Calu3 (cell line): ENCODE measurements at regions of chr12 and their contacts with region 1.

Region 1: DNA sequence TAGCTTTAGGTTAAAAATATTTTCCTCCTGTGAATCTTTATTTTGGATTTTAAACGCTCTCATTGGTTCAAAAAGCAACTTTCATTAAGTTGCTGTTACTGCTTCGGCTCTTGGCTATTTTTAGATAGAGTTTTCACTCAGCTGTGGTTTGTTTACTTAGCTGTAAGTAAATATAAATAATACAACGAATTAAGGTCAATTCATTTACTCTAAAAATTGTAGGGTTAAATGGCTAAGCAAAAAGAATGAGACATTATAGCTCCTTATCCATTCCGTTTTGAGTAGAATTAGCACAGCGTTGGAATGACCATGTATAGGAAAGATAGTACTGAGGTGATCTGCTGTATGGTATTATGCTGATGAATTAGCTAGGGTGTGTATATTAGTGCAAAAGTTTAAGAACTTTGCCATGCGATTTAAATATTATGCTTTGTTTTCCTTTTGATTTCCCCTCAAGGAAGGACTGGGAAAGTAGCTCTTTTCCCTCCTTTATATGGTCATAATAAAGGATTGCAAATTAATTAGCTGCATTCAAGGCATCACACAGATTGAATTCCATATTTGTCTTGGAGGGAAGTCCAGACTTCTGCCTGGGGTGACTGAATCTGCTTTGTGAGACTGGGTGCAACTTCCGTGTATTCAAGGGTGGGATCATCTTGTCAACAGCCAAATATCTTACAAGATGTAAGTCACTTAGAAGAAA is 28.1 kb downstream of the STK38L start:
- DNase-seq: no peak
- H3K4me3 Mint-ChIP-seq: no peak overlapping the region
- H3K27ac Mint-ChIP-seq: no peak overlapping the region
- H3K4me1 Mint-ChIP-seq: peaks cover 31% of the 10 kb centered on the region
- H3K27me3 Mint-ChIP-seq: no peaks in the 10 kb centered on the region
- CTCF ChIP-seq: no peak

Region 2: DNA sequence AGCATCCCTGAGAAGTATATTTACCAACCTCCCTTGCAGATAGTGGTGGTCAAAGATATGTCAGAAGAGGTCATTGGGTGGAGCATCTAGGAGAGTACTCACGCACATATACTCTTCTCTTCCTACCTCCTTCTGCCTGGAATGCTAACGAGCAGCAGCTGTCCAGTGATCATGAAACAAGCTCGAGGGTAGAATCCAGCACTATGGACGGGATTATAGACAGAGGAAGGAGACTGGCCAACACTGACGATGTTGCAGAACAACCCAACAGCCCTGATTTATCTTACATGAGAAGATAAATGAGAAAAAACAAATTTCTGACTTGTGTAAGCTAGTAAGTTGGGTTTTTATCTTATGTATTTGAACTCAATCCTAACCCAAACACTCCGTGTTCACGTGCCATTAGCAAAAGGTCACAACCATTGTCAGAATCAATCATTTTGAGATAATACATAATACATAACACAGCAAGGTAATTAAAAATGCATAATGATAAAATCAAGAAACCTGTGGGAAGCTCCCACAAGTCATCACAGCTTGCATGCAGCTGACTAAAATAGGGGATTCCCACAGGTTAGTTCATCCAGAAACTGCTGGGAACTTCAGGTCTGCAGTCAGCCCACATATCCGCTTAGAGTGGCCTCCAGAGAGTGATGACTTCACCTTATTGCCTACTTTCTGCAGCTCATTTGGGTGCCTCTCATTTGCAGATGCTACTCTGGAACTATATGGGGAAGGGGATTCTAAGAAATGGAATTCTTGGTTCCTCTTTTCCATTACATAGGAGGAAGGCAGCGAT is 64.3 kb before region 1 on chr12:
- CTCF ChIA-PET with region 1: no interaction called
- intact Hi-C with region 1: no loop called
- DNase-seq: no peak
- H3K4me3 Mint-ChIP-seq: no peak overlapping the region
- H3K27ac Mint-ChIP-seq: no peak overlapping the region
- H3K4me1 Mint-ChIP-seq: no peaks in the 10 kb centered on the region
- H3K27me3 Mint-ChIP-seq: no peaks in the 10 kb centered on the region
- CTCF ChIP-seq: no peak

Region 3: DNA sequence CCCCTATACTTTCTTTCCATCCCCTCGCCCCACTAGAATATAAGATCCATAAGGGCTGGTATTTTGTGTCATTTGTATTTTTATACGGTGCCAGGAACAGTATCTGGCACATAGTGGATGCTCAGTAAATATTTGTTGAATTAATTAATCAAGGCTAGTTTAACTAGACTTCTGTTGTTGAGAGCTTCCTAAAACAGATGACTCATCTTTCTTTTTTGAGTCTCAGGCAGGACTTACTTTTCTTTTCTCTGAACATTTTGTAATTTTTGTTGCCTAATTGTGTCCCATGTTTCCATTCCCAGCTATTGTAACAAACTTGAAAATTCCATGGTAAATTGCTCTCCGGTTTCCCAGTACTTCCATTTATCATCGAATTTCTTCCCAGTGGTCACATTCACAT is 11.4 kb before region 1 on chr12:
- CTCF ChIA-PET with region 1: interaction called, 3 read pairs
- intact Hi-C with region 1: loop called (anchors 1 kb)
- DNase-seq: no peak
- H3K4me3 Mint-ChIP-seq: no peak overlapping the region
- H3K27ac Mint-ChIP-seq: no peak overlapping the region
- H3K4me1 Mint-ChIP-seq: no peaks in the 10 kb centered on the region
- H3K27me3 Mint-ChIP-seq: no peaks in the 10 kb centered on the region
- CTCF ChIP-seq: no peak